Activated CD8-positive, alpha-beta T cell treated with anti-CD3 and anti-CD28 coated beads, Interleukin-2, amount 10 ng/mL, durations not matched to agents 7 days and 5 days (primary cell): ENCODE measurements at regions of chr14 and their contacts with region 1.

Region 1: GRCh38 chr14:65164068-65164824 is 61.9 kb upstream of the MAX start:
- DNase-seq: peak; percentile 67
- ATAC-seq: peak; percentile 71
- H3K4me3 Mint-ChIP-seq: no peak overlapping the region
- H3K27ac Mint-ChIP-seq: peak overlapping the region; percentile 27
- H3K4me1 Mint-ChIP-seq: peaks cover 29% of the 10 kb centered on the region
- H3K27me3 Mint-ChIP-seq: no peaks in the 10 kb centered on the region

Region 2: GRCh38 chr14:65177551-65177950 is 13.3 kb after region 1 on chr14:
- CTCF ChIA-PET with region 1: interaction called, 13 read pairs
- POLR2A ChIA-PET with region 1: interaction called, 4 read pairs
- DNase-seq: no peak
- ATAC-seq: no peak
- H3K4me3 Mint-ChIP-seq: no peak overlapping the region
- H3K27ac Mint-ChIP-seq: no peak overlapping the region
- H3K4me1 Mint-ChIP-seq: peaks cover 15% of the 10 kb centered on the region
- H3K27me3 Mint-ChIP-seq: peaks cover 4% of the 10 kb centered on the region

Region 3: DNA sequence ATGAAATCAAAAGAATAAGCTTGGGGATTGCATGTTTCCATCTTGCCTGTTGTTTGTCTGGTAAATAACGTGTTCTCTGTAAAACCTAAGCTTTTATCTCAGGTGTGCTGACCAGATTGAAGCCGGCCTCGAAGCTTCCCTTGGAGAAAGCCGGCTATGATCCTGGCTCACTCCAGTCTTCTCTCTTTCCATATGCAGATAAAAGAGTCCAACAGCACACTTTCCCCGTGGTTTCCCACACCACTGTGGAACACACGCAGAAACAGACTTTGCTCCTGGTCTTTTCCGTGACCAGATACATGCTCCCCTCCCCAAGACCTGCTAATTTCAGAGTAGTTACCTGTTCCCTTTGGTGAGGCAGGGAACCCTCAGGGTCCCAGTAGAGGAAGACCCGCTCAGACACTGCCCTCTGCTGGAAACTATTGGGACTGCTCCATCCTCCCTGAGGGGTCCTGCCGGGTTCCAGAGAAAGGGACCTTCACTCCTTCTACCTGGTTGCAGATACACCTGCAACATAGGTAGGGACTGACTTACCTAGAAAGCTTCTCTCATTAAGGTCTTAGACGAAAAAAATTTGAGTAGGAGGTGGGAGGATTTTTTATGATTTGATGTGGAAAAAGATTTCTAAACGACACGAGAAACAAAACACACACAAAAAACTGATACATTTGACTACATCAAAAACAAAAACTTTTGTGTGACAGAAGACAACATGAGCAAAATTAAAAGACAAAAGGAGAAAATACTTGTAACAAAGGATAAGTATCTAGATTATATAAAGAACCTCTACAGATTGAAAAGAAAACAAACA is 906.5 kb after region 1 on chr14:
- CTCF ChIA-PET with region 1: interaction called, 15 read pairs
- POLR2A ChIA-PET with region 1: no interaction called
- DNase-seq: peak; percentile 82
- ATAC-seq: peak; percentile 77
- H3K4me3 Mint-ChIP-seq: no peak overlapping the region
- H3K27ac Mint-ChIP-seq: no peak overlapping the region
- H3K4me1 Mint-ChIP-seq: peaks cover 13% of the 10 kb centered on the region
- H3K27me3 Mint-ChIP-seq: peaks cover 6% of the 10 kb centered on the region